Posterior vena cava (tissue), 2 donors: ENCODE measurements at regions of chr2 and their contacts with region 1.

Region 1: DNA sequence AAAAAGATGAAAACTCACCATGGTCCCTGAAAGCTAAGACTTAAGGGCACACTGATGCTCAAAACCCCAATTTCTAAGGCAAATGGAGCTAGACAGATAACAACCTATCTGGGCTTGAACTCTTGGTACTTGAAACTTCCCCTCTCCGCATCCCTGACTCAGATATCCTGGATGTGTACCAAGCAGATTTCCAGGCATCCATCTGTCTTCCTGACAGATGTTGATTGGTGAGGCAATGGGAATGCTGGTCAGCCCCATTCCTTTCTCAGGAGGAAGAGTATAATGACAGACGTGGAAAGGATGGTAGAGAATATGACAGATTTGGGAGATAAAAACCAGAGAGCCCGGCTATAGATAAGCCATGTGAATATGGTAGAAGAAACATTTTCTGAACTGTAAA is 69.2 kb downstream of the ADD2 start:
- DNase-seq: no peak

Region 2: DNA sequence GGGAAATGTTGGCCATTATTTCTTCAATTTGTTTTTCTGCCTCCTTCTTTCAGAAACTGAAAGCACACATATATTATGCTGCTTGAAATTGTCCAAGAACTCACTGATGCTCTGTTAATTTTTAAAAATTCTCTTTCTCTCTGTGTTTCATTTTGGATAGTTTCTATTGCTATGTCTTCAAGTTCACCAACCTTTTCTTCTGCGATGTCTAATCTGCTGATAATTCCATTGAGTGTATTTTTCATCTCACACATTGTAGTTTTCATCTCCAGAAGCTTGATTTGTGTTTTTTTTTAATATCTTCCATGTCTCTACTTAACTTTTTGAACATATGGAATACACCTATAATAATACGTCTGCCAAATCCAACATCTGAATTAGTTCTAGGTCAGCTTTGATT is 47.1 kb before region 1 on chr2:
- intact Hi-C with region 1: loop called in 1 of 2 experiments (anchors 2 kb)
- DNase-seq: no peak